WTC11 (cell line): ENCODE measurements at regions of chr19 and their contacts with region 1.

Region 1: DNA sequence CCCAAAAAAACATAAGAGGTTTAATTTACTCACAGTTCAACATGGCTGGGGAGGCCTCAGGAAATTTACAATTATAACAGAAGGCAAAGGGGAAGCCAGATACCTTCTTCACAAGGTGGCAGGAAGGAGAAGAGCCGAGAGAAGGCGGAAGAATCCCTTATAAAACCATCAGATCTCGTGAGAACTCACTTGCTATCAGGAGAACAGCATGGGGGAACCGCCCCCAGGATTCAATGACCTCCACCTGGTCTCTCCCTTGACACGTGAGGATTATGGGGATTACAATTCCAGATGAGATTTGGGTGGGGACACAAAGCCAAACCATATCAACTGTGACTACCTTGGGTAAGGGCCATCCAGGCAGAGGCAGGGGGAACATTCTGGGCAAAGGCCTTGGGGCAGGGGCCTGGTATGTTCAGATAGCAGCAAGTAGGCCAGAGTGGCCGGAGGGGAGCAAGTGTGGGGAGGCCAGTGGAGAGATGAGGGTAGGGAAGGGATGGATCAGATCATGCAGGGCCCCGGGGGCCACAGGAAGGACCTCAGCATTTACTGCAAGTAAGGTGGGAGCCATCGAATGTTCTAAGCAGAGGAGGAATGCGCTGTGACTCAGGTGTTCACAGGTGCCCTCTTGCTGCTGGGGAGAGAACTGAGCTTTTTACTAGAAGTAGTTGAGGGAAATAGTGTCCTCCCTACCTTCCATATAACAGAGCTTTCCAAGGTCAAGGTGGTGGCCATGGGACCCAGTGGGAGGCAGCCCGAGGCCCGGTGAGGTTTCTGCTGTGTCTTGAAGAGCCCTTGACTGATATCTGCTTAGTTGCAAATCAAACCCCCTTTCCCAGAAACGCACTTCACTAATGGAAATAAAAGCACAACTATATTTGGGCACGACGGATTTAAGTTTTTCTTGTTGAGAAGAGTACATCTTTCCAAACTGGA is 18.0 kb downstream of the RAB3D start:
- DNase-seq: no peak
- ATAC-seq: peak; percentile 53
- H3K4me3 Mint-ChIP-seq: no peak overlapping the region
- H3K27ac Mint-ChIP-seq: no peak overlapping the region; the same call in 1 of the 2 replicates
- H3K4me1 Mint-ChIP-seq: peaks cover 16% of the 10 kb centered on the region
- H3K27me3 Mint-ChIP-seq: no peaks in the 10 kb centered on the region; the same call in 1 of the 2 replicates
- CTCF ChIP-seq: no peak

Region 2: GRCh38 chr19:11339254-11340098 is 18.0 kb after region 1 on chr19 and contains the start of gene RAB3D:
- CTCF ChIA-PET with region 1: interaction called, 11 read pairs
- POLR2A ChIA-PET with region 1: interaction called, 5 read pairs
- DNase-seq: peak; percentile 98
- ATAC-seq: peak; percentile 99
- H3K4me3 Mint-ChIP-seq: peak within 1 kb of the TSS; percentile 81
- H3K27ac Mint-ChIP-seq: peak within 1 kb of the TSS; percentile 41; the same call in 1 of the 2 replicates
- H3K4me1 Mint-ChIP-seq: peaks cover 7% of the 10 kb centered on the region
- H3K27me3 Mint-ChIP-seq: no peaks in the 10 kb centered on the region
- CTCF ChIP-seq: no peak
- total RNA-seq, gene RAB3D: 18.9 to 27.8 TPM (median 27.0 TPM) in 3 replicates

Region 3: GRCh38 chr19:11405846-11406643 is 84.6 kb after region 1 on chr19:
- CTCF ChIA-PET with region 1: no interaction called
- POLR2A ChIA-PET with region 1: no interaction called
- DNase-seq: peak; percentile 75
- ATAC-seq: peak; percentile 96
- H3K4me3 Mint-ChIP-seq: no peak overlapping the region
- H3K27ac Mint-ChIP-seq: no peak overlapping the region
- H3K4me1 Mint-ChIP-seq: no peaks in the 10 kb centered on the region
- H3K27me3 Mint-ChIP-seq: no peaks in the 10 kb centered on the region
- CTCF ChIP-seq: no peak